ENCODE measurements at regions of chr3 and their contacts with region 1.

Region 1: GRCh38 chr3:186790261-186790981 is 7.0 kb downstream of the EIF4A2 start:
- DNase-seq: peak; percentile 50
- H3K4me3 ChIP-seq: no peak overlapping the region
- H3K27ac ChIP-seq: no peak overlapping the region
- H3K4me1 ChIP-seq: peaks cover 22% of the 10 kb centered on the region
- H3K27me3 ChIP-seq: no peaks in the 10 kb centered on the region
- CTCF ChIP-seq: peak in 1 of 2 donors; percentile 4
- POLR2A ChIP-seq: peak; percentile 75

Region 2: GRCh38 chr3:186806089-186807055 is 16.0 kb after region 1 on chr3 and contains the start of gene RFC4:
- CTCF ChIA-PET with region 1: interaction called, 7 read pairs
- POLR2A ChIA-PET with region 1: no interaction called
- dilution Hi-C with region 1: no loop called
- intact Hi-C with region 1: loop called (anchors 2 kb)
- DNase-seq: peak; percentile 75
- H3K4me3 ChIP-seq: peak within 1 kb of the TSS; percentile 29 to 85 (median 63)
- H3K27ac ChIP-seq: peak within 1 kb of the TSS; percentile 42
- H3K4me1 ChIP-seq: peaks cover 12% of the 10 kb centered on the region
- H3K27me3 ChIP-seq: no peaks in the 10 kb centered on the region
- CTCF ChIP-seq: no peak
- POLR2A ChIP-seq: peak; percentile 85
- total RNA-seq, gene RFC4: 29.1 and 33.7 TPM in 2 replicates

Region 3: DNA sequence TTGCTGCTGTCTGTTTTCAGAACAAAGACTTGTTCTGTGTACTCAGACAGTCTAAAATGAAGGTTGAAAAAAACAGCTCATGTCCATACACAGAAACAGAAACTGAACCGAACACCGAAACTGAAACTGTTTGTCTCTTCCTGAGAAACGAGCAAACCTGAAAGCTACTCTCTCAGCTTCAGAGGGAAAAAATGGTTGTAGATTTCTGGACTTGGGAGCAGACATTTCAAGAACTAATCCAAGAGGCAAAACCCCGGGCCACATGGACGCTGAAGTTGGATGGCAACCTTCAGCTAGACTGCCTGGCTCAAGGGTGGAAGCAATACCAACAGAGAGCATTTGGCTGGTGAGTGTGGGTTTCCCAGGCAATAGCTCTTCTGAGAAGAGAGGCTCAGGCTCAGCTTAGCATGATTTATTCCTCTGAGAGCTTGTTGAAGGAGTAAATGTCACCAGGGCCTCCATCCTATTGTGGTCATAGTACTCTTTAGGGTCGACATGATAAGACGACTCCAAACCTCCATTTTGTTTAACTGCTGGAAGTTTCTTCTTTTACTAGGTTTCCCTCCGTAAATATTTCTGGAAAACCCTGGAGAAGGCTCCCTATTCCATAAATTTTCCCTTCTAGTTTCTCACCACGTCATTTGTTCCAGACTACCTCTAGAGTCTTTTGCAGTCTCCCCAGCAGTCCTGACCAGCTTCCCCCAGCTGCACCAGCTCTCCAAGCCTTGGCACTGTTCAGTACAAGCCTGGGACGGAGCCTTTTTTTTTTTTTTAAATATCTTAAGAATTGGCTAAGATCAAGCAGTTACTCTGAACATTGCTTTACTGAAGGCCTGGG is 578.0 kb after region 1 on chr3 and contains the start of gene RTP4:
- CTCF ChIA-PET with region 1: no interaction called
- POLR2A ChIA-PET with region 1: no interaction called
- dilution Hi-C with region 1: no loop called
- intact Hi-C with region 1: no loop called
- DNase-seq: peak; percentile 61
- H3K4me3 ChIP-seq: peak within 1 kb of the TSS in 1 of 3 experiments; percentile 29
- H3K27ac ChIP-seq: no peak within 1 kb of the TSS
- H3K4me1 ChIP-seq: no peaks in the 10 kb centered on the region
- H3K27me3 ChIP-seq: no peaks in the 10 kb centered on the region
- CTCF ChIP-seq: no peak
- POLR2A ChIP-seq: no peak
- total RNA-seq, gene RTP4: 0.22 TPM in 1 of 2 replicates, not detected in the other